HepG2 (cell line): ENCODE measurements at regions of chr2 and their contacts with region 1.

Region 1: GRCh38 chr2:191501561-191502168 is 176.3 kb upstream of the NABP1 start:
- DNase-seq: peak; percentile 35
- ATAC-seq: peak; percentile 71
- H3K4me3 ChIP-seq: peak overlapping the region in 1 of 3 experiments; percentile 30; a peak in 1 of 6 replicates
- H3K27ac ChIP-seq: no peak overlapping the region
- H3K4me1 ChIP-seq: peaks cover 20% of the 10 kb centered on the region
- H3K27me3 ChIP-seq: peaks cover 0 to 7% of the 10 kb centered on the region in 2 experiments; a peak in 2 of 5 replicates
- CTCF ChIP-seq: peak; percentile 70
- EP300 ChIP-seq: no peak
- POLR2A ChIP-seq: no peak
- RAD21 ChIP-seq: no peak

Region 2: GRCh38 chr2:191051825-191052778 is 449.6 kb before region 1 on chr2:
- CTCF ChIA-PET with region 1: no interaction called
- POLR2A ChIA-PET with region 1: no interaction called
- in situ Hi-C with region 1: loop called (anchors 25 kb)
- intact Hi-C with region 1: loop called (anchors 5 kb)
- DNase-seq: peak; percentile 56
- ATAC-seq: peak; percentile 72
- H3K4me3 ChIP-seq: no peak overlapping the region
- H3K27ac ChIP-seq: no peak overlapping the region
- H3K4me1 ChIP-seq: peaks cover 17% of the 10 kb centered on the region
- H3K27me3 ChIP-seq: peaks cover 0 to 1% of the 10 kb centered on the region in 2 experiments; a peak in 2 of 5 replicates
- CTCF ChIP-seq: peak; percentile 64
- EP300 ChIP-seq: no peak
- POLR2A ChIP-seq: no peak
- RAD21 ChIP-seq: no peak

Region 3: DNA sequence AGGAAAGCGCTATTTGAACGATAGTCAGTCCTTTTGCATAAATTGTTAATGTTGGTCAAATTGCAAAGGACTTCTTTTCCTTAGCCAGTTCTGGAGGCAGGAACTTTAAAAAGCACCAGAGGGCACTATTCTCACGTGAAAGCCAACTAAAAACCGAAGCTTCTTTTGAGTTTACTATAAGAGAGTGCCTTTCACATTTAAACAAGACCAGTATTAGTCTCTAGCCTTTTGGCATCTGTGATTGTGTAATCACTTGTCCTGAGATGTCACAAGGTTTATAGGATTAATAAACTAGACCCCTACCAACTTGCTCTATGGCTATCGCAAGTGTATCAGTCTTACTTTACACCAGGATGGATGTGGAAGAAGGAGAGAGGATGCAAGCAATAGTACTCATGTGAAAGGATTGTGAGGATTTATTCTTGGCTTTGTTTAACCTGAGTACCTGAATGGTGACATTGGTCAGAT is 336.5 kb before region 1 on chr2:
- CTCF ChIA-PET with region 1: interaction called, 4 read pairs
- POLR2A ChIA-PET with region 1: no interaction called
- in situ Hi-C with region 1: no loop called
- intact Hi-C with region 1: loop called (anchors 1 kb)
- DNase-seq: peak; percentile 23
- ATAC-seq: peak; percentile 82
- H3K4me3 ChIP-seq: no peak overlapping the region
- H3K27ac ChIP-seq: no peak overlapping the region
- H3K4me1 ChIP-seq: peaks cover 16% of the 10 kb centered on the region
- H3K27me3 ChIP-seq: no peaks in the 10 kb centered on the region
- CTCF ChIP-seq: peak; percentile 60
- EP300 ChIP-seq: no peak
- POLR2A ChIP-seq: no peak
- RAD21 ChIP-seq: no peak

Region 4: DNA sequence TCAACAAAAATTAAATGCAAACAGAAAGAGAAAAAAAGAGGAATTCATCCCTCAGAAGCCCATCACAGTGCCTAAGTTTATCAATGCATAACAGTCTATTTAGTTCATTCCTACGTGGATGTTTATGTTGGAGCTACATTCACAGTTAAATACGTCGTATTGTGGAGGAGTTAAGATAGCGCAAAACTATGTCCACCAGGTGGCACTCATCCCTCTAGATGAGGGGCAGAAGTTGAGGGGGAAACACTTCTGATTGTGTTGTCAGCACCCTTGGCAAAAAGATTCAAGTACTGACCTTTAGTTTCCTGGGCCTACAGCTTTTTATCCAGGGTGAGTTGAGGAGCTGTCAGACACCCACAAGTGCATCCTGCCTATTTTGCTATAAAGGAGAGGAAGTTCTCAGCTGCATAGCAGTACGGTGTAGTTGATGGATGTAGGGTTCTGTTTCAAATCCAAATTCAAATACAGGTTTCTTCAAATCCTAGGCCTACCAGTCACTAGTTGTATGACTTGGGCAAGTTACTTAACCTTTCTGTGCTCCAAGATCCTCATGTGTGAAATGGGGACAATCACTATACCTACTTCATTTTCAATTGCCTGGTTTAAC is 283.3 kb before region 1 on chr2:
- CTCF ChIA-PET with region 1: interaction called, 16 read pairs
- POLR2A ChIA-PET with region 1: no interaction called
- in situ Hi-C with region 1: no loop called
- intact Hi-C with region 1: loop called (anchors 1 kb)
- DNase-seq: peak; percentile 80
- ATAC-seq: peak; percentile 97
- H3K4me3 ChIP-seq: no peak overlapping the region
- H3K27ac ChIP-seq: no peak overlapping the region
- H3K4me1 ChIP-seq: peaks cover 27% of the 10 kb centered on the region
- H3K27me3 ChIP-seq: no peaks in the 10 kb centered on the region
- CTCF ChIP-seq: peak; percentile 93
- EP300 ChIP-seq: no peak
- POLR2A ChIP-seq: no peak
- RAD21 ChIP-seq: peak; percentile 83

Region 5: GRCh38 chr2:191231995-191232394 is 269.7 kb before region 1 on chr2:
- CTCF ChIA-PET with region 1: no interaction called
- POLR2A ChIA-PET with region 1: no interaction called
- in situ Hi-C with region 1: no loop called
- intact Hi-C with region 1: loop called (anchors 2 kb)
- DNase-seq: no peak
- ATAC-seq: no peak; the same call in 2 of the 3 replicates
- H3K4me3 ChIP-seq: no peak overlapping the region
- H3K27ac ChIP-seq: no peak overlapping the region
- H3K4me1 ChIP-seq: no peaks in the 10 kb centered on the region
- H3K27me3 ChIP-seq: no peaks in the 10 kb centered on the region
- CTCF ChIP-seq: peak; percentile 66
- EP300 ChIP-seq: no peak
- POLR2A ChIP-seq: no peak
- RAD21 ChIP-seq: peak; percentile 69

Region 6: DNA sequence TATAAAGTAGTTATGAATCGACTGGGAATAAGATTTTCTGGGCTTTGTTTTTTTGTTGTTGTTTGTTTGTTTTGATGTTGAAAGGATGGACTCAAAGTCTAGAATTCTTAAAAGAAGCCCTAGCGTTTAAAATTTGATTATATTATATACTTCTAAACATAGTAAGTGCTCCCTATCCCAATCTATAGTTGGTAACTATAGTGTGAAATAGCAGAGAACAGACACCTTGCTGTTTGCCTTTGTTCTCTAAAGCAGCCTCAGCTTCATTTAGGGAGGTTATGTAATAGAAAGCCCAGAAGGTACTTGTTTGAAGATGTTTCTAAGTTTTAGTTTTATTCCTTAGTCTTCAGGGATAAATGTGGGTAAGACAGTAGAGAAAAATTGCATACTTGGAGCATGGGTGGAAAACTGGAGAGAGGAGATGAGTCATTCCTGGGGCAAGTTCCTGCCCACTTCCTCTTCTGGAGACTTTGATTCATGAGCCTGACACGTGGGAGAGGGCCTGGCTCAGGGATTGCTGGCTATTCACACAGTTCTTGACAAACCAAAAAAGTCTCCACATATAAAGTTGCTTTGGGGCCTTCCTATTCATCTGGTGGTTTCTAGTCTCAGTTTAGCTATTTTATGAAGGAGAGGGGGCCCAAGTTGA is 124.6 kb before region 1 on chr2:
- CTCF ChIA-PET with region 1: no interaction called
- POLR2A ChIA-PET with region 1: no interaction called
- in situ Hi-C with region 1: no loop called
- intact Hi-C with region 1: loop called (anchors 10 kb)
- DNase-seq: peak; percentile 86
- ATAC-seq: peak; percentile 98
- H3K4me3 ChIP-seq: no peak overlapping the region
- H3K27ac ChIP-seq: peak overlapping the region; percentile 52
- H3K4me1 ChIP-seq: peaks cover 44% of the 10 kb centered on the region
- H3K27me3 ChIP-seq: no peaks in the 10 kb centered on the region
- CTCF ChIP-seq: no peak
- EP300 ChIP-seq: peak in 1 of 2 experiments; percentile 80; a peak in 2 of 4 replicates
- POLR2A ChIP-seq: no peak
- RAD21 ChIP-seq: no peak